Astrocyte of the cerebellum (primary cell): ENCODE measurements at regions of chr2 and their contacts with region 1.

Region 1: DNA sequence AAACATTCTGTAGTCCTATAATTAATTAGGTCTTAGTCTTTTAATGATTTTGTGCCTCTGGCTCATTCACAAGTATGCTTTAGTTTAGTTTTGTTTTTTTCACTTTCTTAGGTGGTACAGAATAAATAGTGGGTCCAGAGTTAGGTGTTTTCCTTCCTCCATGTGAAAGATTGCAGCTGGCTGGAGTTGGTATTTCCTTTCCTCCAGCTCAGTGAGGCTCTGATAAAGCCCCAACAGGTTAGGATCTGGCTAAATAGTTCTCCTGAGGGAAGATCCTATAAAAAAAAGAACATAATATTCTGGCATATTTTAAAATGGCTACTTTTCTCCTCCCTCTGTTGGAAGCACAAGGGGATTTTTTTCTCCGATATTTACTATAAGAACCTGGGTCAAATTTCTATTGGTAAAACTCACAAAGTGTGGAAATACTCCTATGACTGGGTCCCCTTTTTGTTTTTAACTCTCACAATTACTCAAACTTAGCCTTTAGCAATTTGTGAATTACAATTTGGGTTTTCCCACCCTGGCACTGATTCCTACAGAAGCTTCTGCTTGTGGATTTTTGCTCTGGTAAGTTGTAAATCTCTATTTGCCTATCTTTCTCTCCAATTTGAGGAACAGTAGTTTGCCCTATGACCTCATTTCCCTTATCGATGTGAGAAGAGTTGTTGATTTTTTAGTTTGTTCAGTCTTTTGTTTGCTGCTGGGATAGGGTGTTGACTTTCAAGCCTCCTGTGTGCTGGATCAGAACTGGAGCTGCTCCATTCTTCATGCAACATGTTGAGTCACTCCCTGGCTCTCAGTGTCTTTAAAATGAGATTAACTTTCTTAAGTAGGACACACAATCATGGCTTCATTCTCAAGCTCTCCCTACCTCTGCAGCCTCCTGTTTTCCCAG is 500.9 kb downstream of the RNF144A start:
- DNase-seq: no peak
- H3K4me3 ChIP-seq: no peak overlapping the region
- CTCF ChIP-seq: no peak

Region 2: DNA sequence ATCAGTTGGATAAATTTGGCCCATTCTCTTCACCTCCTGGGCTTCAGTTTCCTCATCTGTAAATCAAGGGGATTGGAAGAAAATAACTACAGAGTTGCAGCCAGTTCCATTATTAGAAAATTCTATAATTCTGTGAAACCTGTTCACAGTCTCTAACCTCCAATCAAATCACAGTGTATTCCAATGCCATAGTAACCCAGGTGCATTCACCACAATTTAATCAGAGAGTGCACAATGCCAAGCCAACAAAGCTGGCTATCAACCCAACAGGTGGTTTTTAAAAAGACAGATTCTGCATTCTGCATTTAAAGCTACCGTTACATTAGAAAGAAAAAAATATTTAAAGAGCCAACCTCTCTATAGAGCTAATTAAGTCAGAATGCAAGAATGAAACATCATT is 192.2 kb before region 1 on chr2:
- in situ Hi-C with region 1: no loop called
- DNase-seq: no peak
- H3K4me3 ChIP-seq: no peak overlapping the region
- CTCF ChIP-seq: no peak

Region 3: GRCh38 chr2:7356909-7357584 is 61.0 kb before region 1 on chr2:
- in situ Hi-C with region 1: loop called (anchors 5 kb)
- DNase-seq: no peak
- H3K4me3 ChIP-seq: no peak overlapping the region
- CTCF ChIP-seq: no peak

Region 4: GRCh38 chr2:8681786-8682692 is 1263.9 kb after region 1 on chr2 and contains the start of gene ID2:
- in situ Hi-C with region 1: loop called (anchors 10 kb)
- DNase-seq: peak; percentile 98
- H3K4me3 ChIP-seq: peak within 1 kb of the TSS; percentile 76
- CTCF ChIP-seq: no peak